Mucosa of descending colon (tissue), 3 donors: ENCODE measurements at regions of chr4 and their contacts with region 1.

Region 1: DNA sequence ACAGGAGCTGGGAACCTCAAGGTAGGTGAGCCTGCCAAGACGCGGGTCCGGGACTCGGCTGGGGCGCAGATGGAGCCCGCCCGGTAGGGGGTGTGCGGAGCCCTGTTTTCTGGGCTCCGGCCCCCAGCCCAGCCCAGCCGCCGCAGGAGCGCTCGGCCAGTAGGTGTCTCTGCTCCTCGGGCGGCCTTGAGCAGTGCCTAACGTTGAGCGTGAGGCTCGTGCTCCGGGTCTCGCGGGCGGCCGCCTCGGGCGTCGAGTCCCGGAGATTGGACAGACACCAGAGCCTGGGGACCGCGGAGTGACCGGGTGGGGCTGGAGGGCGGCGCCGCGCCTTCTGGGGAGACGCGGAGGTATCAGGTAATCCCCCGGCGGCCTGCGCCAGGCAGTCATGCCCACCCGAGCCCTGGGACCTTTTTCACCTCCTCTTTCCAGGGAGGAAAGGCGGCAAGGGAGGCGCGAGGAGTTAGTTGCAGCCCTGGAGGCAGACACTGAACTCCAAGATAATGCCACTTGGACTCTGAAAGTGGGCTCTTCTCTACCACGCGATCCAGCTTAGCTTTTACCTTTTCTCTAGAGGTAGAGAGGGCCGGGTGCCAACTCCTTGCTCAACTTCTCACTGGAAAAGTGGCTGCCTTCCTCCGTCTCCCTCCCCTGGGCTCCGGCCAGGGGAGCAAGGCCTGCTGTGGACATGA is 14.5 kb upstream of the FGG start:
- DNase-seq: peak in 2 of 3 donors; percentile 46 to 64
- ATAC-seq: peak; percentile 83
- H3K4me3 ChIP-seq: no peak overlapping the region
- H3K4me1 ChIP-seq: peaks cover 7% of the 10 kb centered on the region
- CTCF ChIP-seq: peak; percentile 32

Region 2: DNA sequence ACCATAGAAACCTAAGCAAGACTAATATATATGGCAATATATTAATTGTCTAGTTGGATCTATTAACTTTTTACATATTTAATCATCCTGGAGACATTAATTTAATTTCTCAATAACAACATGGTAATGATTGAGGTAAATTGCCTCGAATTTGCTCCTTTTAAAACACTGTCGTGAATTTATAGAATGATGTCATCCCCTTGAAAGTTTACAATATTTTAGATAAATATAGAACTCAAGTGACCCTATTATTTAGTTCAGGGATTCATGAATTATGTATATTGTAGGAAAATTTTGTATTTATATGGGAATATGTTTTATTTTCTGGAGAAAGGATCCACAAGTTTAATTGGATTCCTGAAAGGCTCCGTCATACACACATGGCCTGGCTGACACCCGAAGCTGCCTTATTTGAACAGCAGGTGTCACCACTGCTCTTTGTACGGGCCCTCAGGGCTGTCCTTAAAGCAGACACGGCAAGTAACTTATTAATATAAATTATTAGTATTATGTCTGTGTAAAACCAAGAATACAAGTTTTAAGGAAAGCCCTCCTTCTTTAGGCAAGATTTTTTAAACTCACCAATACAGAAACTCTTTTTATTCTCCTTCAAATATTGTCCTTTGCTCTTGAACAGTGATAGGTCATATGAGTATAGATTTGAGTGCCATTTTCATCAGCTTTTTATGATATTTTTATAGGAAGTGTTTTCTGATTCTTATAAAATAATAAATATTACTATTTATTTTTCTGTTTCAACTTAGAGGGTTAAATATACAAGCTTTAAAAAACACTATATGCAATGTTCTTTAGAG is 74.9 kb before region 1 on chr4:
- intact Hi-C with region 1: loop called in 1 of 2 experiments (anchors 10 kb)
- DNase-seq: peak; percentile 66 to 81 (median 79)
- ATAC-seq: peak; percentile 65
- H3K4me3 ChIP-seq: no peak overlapping the region
- H3K4me1 ChIP-seq: peaks cover 11% of the 10 kb centered on the region
- CTCF ChIP-seq: peak; percentile 70

Region 3: DNA sequence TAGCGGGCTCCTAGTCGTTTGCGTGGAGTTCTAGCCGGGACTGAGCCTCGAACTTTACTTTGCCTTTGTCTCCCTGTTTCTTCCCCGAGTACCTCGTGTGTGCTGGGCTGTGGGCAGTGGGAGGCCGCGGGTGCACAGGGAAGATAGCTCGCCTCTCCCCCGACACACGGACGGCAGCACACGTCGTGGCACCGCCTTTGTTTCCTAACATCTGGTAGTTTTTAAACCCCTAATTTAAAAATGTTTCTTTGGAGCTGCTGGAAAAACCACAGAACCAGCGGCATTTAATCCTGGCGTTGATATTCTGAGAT is 155.0 kb after region 1 on chr4:
- intact Hi-C with region 1: no loop called
- DNase-seq: no peak
- ATAC-seq: no peak
- H3K4me3 ChIP-seq: no peak overlapping the region
- H3K4me1 ChIP-seq: no peaks in the 10 kb centered on the region
- CTCF ChIP-seq: no peak